OCI-LY7 (cell line): ENCODE measurements at regions of chr11 and their contacts with region 1.

Region 1: GRCh38 chr11:115222218-115222862 is 281.9 kb downstream of the CADM1 start:
- DNase-seq: peak; percentile 68
- H3K4me3 ChIP-seq: peak overlapping the region; percentile 53
- H3K27ac ChIP-seq: peak overlapping the region; percentile 89
- H3K4me1 ChIP-seq: peaks cover 81% of the 10 kb centered on the region
- CTCF ChIP-seq: no peak

Region 2: DNA sequence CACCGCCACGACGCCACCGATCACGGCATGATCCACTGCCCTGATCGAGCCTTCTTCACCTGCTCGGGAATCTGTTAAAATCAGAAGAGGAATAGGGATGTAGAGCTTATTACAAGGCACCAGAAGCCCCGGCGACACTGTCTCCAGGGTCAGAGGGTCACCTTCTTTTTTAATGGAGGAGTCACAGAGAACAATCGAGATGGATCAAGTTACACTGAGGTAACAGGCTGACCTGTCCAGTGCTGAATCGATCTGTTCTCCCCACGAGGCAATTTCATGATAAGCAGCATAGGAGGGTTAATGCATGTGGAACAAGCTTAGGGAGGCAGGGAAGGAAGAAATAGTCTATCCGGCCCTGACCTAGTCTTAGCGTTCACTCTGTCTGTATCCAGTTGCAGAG is 43.6 kb before region 1 on chr11:
- CTCF ChIA-PET with region 1: no interaction called
- POLR2A ChIA-PET with region 1: no interaction called
- intact Hi-C with region 1: no loop called
- DNase-seq: no peak
- H3K4me3 ChIP-seq: no peak overlapping the region
- H3K27ac ChIP-seq: no peak overlapping the region
- H3K4me1 ChIP-seq: no peaks in the 10 kb centered on the region
- CTCF ChIP-seq: no peak

Region 3: DNA sequence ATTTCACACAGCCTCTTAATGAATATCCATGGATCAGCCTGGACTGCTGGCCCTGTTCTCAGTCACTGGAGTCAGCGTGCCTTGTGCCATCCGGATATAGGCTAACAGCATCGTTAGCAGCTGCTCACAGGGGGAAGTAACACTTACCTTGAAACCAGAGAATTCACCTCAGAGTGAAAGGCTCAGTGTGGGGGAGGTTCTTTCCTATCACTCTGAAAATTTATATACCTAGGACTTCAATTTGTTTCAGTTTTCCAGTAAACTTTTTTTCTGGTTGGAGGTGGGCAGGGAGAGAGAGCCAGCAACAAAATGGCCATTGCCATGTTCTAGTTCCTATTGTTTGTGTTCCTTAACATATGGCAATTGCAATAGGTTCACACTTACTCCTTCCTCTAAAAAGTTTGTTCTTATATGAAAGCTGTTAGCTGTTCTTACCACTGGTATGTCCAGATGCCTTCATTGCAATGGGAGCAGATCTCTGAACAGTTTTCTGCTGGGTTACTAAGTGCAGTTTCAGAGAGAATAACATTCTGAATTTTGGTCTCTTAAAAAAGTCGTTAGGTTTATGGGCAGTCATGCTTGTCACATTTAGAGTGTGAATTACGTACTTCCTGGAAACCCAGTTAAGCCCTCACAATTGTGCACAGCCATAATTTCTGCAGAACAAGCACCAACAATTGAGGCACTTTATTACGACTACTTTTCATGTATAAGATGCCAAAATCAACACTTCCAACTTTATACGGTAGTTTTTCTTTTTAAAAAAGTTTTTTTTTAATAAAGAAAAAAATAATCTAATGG is 34.3 kb after region 1 on chr11:
- CTCF ChIA-PET with region 1: interaction called, 3 read pairs
- POLR2A ChIA-PET with region 1: interaction called, 9 read pairs
- intact Hi-C with region 1: loop called (anchors 1 kb)
- DNase-seq: peak; percentile 82
- H3K4me3 ChIP-seq: peak overlapping the region; percentile 52
- H3K27ac ChIP-seq: peak overlapping the region; percentile 90
- H3K4me1 ChIP-seq: peaks cover 41% of the 10 kb centered on the region
- CTCF ChIP-seq: no peak

Region 4: GRCh38 chr11:115672999-115673411 is 450.7 kb after region 1 on chr11:
- CTCF ChIA-PET with region 1: no interaction called
- POLR2A ChIA-PET with region 1: no interaction called
- intact Hi-C with region 1: no loop called
- DNase-seq: no peak
- H3K4me3 ChIP-seq: no peak overlapping the region
- H3K27ac ChIP-seq: no peak overlapping the region
- H3K4me1 ChIP-seq: no peaks in the 10 kb centered on the region
- CTCF ChIP-seq: no peak